ENCODE measurements at regions of chr5 and their contacts with region 1.

Region 1: DNA sequence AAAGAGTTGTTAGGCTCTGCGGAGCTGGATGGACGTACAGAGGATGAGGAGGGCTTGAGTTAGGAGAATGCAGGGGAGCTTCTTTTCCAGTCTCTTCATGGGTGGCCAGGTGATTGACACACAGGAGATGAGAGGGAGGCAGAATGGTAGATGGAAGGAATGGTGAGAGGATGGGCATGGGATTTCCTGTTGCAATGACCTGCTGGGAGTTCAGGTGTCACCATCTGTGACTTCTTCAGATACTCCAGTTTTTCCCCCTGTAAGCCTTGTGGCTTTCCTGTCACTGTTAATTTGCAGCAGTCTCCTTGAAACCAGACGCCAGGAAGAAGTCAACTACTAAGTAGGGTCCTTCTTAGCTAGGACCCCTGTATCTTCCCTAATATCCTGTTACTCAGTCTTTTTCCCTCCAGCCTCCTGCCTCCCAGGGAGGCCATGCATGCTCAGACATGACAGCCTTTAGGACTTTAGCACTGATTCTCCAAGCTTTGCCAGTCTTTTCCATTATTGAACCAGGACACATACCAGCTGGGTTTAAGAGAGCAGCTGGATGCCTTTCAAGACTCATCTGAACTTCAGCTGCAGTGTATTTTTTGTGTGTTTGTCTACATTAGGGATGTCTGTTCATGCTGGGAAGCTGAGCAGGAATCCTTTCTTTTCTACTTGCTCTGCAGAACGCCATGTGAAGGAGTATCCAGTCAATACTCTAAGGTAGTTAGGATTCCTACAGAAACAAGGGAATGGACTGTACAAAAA is 67.2 kb upstream of the CD180 start:
- DNase-seq: no peak
- ATAC-seq: no peak
- H3K4me3 Mint-ChIP-seq: no peak overlapping the region
- H3K27ac Mint-ChIP-seq: no peak overlapping the region
- H3K4me1 Mint-ChIP-seq: no peaks in the 10 kb centered on the region
- H3K27me3 Mint-ChIP-seq: no peaks in the 10 kb centered on the region
- CTCF ChIP-seq: no peak

Region 2: GRCh38 chr5:67246108-67246507 is 17.7 kb before region 1 on chr5:
- CTCF ChIA-PET with region 1: interaction called, 33 read pairs
- POLR2A ChIA-PET with region 1: no interaction called
- intact Hi-C with region 1: no loop called
- DNase-seq: peak; percentile 13
- ATAC-seq: peak; percentile 30
- H3K4me3 Mint-ChIP-seq: no peak overlapping the region
- H3K27ac Mint-ChIP-seq: no peak overlapping the region
- H3K4me1 Mint-ChIP-seq: peaks cover 11% of the 10 kb centered on the region
- H3K27me3 Mint-ChIP-seq: no peaks in the 10 kb centered on the region
- CTCF ChIP-seq: peak; percentile 85